ENCODE measurements at regions of chr5 and their contacts with region 1.

Region 1: DNA sequence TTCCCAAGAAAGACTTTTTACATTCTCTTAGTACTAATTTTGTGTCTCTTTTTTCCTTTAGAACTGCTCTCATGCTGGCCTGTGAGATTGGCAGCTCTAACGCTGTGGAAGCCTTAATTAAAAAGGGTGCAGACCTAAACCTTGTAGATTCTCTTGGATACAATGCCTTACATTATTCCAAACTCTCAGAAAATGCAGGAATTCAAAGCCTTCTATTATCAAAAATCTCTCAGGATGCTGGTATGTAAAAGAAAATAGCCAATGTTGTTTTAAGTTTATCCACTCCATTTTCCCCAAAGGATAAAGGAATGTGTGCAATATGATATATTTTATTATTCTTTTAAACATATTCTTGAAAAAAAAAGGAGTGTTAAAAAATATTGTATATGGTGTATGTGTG is 27.3 kb upstream of the TTC23L start:
- DNase-seq: no peak
- ATAC-seq: no peak
- H3K4me3 ChIP-seq: no peak overlapping the region
- H3K4me3 Mint-ChIP-seq: no peak overlapping the region
- H3K27ac ChIP-seq: no peak overlapping the region
- H3K27ac Mint-ChIP-seq: no peak overlapping the region
- H3K4me1 ChIP-seq: no peaks in the 10 kb centered on the region
- H3K4me1 Mint-ChIP-seq: no peaks in the 10 kb centered on the region
- H3K27me3 ChIP-seq: no peaks in the 10 kb centered on the region
- H3K27me3 Mint-ChIP-seq: peaks cover 5% of the 10 kb centered on the region
- CTCF ChIP-seq: no peak

Region 2: GRCh38 chr5:34686762-34687268 is 124.9 kb before region 1 on chr5:
- CTCF ChIA-PET with region 1: no interaction called
- POLR2A ChIA-PET with region 1: no interaction called
- intact Hi-C with region 1: no loop called
- DNase-seq: no peak
- ATAC-seq: no peak
- H3K4me3 ChIP-seq: no peak overlapping the region
- H3K4me3 Mint-ChIP-seq: no peak overlapping the region
- H3K27ac ChIP-seq: no peak overlapping the region
- H3K27ac Mint-ChIP-seq: no peak overlapping the region
- H3K4me1 ChIP-seq: no peaks in the 10 kb centered on the region
- H3K4me1 Mint-ChIP-seq: no peaks in the 10 kb centered on the region
- H3K27me3 ChIP-seq: no peaks in the 10 kb centered on the region
- H3K27me3 Mint-ChIP-seq: peaks cover 10% of the 10 kb centered on the region
- CTCF ChIP-seq: no peak

Region 3: DNA sequence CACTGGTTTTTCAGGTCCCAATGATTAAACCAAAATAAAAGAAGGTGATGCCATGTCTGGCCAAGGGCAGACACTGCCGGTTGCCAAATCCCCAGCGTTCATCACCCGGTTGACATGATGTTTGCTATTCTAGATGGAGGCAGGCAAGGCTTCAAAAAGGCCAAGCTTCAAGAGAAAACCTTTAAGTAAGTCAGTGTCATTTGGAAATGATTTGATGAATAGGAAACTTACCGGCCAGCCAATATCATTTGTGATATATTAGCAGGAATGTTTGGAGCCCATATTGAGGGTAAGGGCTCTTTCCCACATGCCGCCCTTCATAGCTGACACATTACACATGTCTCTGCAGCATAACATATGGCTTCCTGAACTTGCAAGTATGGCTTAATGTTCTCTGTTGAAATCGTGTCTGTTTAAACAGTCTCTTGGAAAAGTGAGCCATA is 62.3 kb before region 1 on chr5:
- CTCF ChIA-PET with region 1: no interaction called
- POLR2A ChIA-PET with region 1: no interaction called
- intact Hi-C with region 1: no loop called
- DNase-seq: no peak
- ATAC-seq: no peak
- H3K4me3 ChIP-seq: no peak overlapping the region
- H3K4me3 Mint-ChIP-seq: no peak overlapping the region
- H3K27ac ChIP-seq: no peak overlapping the region
- H3K27ac Mint-ChIP-seq: no peak overlapping the region
- H3K4me1 ChIP-seq: no peaks in the 10 kb centered on the region
- H3K4me1 Mint-ChIP-seq: no peaks in the 10 kb centered on the region
- H3K27me3 ChIP-seq: no peaks in the 10 kb centered on the region
- H3K27me3 Mint-ChIP-seq: peaks cover 8% of the 10 kb centered on the region
- CTCF ChIP-seq: no peak

Region 4: DNA sequence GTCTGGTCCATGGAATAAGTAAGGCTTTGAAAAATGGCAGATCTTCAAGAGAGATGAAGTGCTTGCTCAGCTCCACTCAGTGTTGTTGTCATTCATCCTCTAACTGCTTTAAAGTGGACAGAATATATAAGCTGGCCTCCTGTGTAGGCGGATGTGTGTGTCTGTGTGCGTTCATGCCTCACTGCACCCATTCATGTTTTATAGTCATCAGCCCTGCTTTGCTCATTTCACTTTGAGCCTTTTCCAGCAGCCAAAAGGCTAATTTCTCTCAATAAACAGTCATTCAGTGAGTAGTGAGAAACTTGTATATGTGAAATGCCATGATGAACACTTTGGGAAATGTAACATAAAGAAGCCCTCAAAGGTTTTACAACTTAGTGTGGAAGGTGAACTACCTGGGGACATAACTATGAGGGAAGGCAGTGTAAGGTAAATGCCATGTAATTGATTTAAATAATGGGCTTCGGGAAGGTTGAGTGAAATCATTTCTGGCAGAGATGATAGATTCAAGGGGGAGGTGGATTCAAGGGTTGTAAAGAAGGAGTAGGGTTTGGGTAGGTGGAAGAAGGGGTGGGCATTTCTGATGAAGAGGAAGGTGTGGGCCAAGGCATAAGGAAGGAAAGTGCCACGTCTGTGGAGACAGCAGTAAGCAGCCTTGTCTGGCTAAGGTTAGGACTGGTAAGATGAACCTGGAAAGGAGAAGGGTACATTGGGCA is 42.9 kb after region 1 on chr5:
- CTCF ChIA-PET with region 1: no interaction called
- POLR2A ChIA-PET with region 1: no interaction called
- intact Hi-C with region 1: loop called in 1 of 2 experiments (anchors 5 kb)
- DNase-seq: no peak
- ATAC-seq: no peak
- H3K4me3 ChIP-seq: no peak overlapping the region
- H3K4me3 Mint-ChIP-seq: no peak overlapping the region
- H3K27ac ChIP-seq: no peak overlapping the region
- H3K27ac Mint-ChIP-seq: no peak overlapping the region
- H3K4me1 ChIP-seq: no peaks in the 10 kb centered on the region
- H3K4me1 Mint-ChIP-seq: no peaks in the 10 kb centered on the region
- H3K27me3 ChIP-seq: no peaks in the 10 kb centered on the region
- H3K27me3 Mint-ChIP-seq: peaks cover 5% of the 10 kb centered on the region
- CTCF ChIP-seq: no peak